Naive thymus-derived CD4-positive, alpha-beta T cell (primary cell): ENCODE measurements at regions of chr12 and their contacts with region 1.

Region 1: DNA sequence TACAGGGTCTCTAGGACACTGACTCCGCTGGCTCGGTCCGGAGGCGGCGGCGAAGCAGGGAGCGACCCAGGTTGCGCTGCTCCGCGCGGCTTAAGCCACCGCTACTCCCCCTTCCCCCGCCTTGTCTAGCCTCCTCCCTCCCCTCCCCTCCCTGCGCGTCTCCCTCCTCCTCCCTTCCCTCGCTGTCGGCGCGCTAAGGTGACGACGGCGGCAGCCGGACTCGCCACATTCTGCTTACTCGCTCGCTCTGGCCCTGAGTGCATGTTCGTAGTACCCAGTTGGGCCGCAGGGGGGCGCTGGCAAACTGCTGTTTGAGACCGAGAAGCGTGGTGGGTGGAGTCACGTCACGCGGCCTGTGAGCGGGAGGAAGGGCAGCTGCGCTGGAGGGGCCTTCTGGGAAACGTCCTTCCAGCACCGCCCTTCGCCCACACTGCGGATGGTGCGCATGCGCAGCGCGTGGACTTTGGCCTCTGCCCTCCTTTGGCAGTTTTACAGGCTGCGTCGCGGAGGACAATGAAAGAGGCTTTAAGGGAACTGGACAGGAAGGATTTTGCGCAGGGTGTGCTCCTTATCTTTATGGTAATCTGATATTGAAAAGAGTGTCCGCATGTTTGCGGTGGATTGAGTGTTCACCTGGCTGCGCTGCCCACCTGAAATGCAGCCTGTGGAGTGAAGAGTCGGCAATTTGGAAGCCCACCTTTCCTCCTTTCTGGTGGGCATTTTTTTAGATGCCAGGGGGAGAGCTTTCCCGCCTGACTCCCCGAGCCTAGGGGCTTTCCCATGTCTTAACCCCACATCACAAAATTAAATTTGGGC is at the start of gene SCAF11:
- DNase-seq: peak; percentile 100
- ATAC-seq: peak; percentile 92
- H3K4me3 ChIP-seq: peak within 1 kb of the TSS; percentile 94
- H3K4me3 Mint-ChIP-seq: peak within 1 kb of the TSS; percentile 91 to 99 (median 96)
- H3K27ac ChIP-seq: peak within 1 kb of the TSS; percentile 97
- H3K27ac Mint-ChIP-seq: peak within 1 kb of the TSS; percentile 99 to 100 (median 100)
- H3K4me1 ChIP-seq: peaks cover 21 to 35% of the 10 kb centered on the region in 2 donors
- H3K4me1 Mint-ChIP-seq: peaks cover 36 to 53% (median 47%) of the 10 kb centered on the region in 7 donors
- H3K27me3 ChIP-seq: no peaks in the 10 kb centered on the region
- H3K27me3 Mint-ChIP-seq: peaks cover 0 to 15% (median 0%) of the 10 kb centered on the region in 5 donors
- total RNA-seq, gene SCAF11: 144 to 194 (median 165) TPM

Region 2: DNA sequence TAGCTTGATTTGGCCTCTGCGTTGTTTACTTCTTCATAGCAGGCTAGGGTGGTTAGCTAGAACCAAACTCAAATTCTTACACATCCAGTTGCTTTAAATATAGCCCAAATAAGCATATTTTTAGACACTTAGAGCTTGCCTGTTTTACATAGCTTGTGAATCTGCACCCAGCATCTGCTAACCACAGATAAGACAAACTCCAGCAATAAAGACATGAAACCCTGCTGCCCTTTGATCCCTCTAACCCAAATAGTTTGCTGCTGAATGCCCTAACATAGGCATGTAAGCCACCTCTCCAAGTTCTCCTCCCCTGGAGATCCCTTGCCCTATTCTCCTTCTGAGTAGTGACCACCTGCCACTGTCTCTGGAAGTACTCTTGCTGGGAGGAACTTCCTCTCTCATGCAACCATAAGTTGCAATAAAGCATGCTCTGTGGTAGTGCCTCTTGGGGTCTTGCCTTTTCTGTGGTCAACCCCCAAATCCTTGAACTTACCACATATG is 1969.2 kb before region 1 on chr12:
- CTCF ChIA-PET with region 1: no interaction called
- POLR2A ChIA-PET with region 1: no interaction called
- intact Hi-C with region 1: no loop called
- DNase-seq: no peak
- ATAC-seq: no peak
- H3K4me3 ChIP-seq: no peak overlapping the region
- H3K4me3 Mint-ChIP-seq: no peak overlapping the region
- H3K27ac ChIP-seq: no peak overlapping the region
- H3K27ac Mint-ChIP-seq: no peak overlapping the region
- H3K4me1 ChIP-seq: no peaks in the 10 kb centered on the region
- H3K4me1 Mint-ChIP-seq: no peaks in the 10 kb centered on the region
- H3K27me3 ChIP-seq: no peaks in the 10 kb centered on the region
- H3K27me3 Mint-ChIP-seq: no peaks in the 10 kb centered on the region

Region 3: DNA sequence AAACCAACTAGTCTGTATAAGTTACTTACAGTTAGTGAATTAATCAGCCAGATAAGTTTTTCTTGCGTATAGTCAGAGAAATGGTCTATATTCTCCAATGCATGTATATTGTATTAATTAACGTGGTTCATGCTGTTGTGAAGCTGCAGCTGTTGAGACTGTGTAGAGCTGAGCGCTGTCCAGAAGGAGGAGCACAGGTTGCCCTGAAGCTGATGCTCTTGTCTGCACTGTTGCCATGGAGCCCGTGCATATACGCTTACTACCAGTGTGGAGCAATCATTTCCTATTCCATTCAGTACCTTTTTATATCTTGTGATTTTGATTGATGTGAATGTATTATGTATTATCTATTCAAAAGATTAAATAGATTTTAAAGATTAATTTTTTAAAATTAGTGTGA is 335.5 kb before region 1 on chr12:
- CTCF ChIA-PET with region 1: no interaction called
- POLR2A ChIA-PET with region 1: no interaction called
- intact Hi-C with region 1: loop called in 1 of 2 experiments (anchors 1 kb)
- DNase-seq: peak in 8 of 9 donors; percentile 17 to 83 (median 70)
- ATAC-seq: peak; percentile 100
- H3K4me3 ChIP-seq: no peak overlapping the region
- H3K4me3 Mint-ChIP-seq: no peak overlapping the region
- H3K27ac ChIP-seq: no peak overlapping the region
- H3K27ac Mint-ChIP-seq: peak overlapping the region in 1 of 9 donors; percentile 30
- H3K4me1 ChIP-seq: no peaks in the 10 kb centered on the region
- H3K4me1 Mint-ChIP-seq: peaks cover 0 to 10% (median 7%) of the 10 kb centered on the region in 7 donors
- H3K27me3 ChIP-seq: no peaks in the 10 kb centered on the region
- H3K27me3 Mint-ChIP-seq: peaks cover 0 to 60% (median 5%) of the 10 kb centered on the region in 5 donors

Region 4: DNA sequence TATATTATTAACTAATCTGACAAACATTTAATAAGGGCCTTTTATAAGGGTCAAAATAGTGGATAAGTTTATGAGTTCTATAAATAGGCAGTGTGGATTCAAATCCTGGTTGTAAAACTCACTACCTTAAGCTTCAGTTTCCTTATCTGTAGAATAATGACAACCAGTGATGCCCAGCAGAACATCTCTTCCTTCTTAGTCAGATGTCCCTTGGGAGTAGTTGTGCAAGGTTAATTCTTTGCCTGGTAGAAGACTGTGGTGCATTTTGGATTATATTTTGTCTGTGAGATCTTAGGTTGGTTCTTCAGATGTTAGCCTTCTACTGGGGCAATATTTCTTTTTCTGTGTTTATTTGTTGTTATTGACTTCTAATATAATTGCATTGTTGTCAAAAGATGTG is 201.7 kb before region 1 on chr12:
- CTCF ChIA-PET with region 1: no interaction called
- POLR2A ChIA-PET with region 1: no interaction called
- intact Hi-C with region 1: no loop called
- DNase-seq: no peak
- ATAC-seq: no peak
- H3K4me3 ChIP-seq: no peak overlapping the region
- H3K4me3 Mint-ChIP-seq: no peak overlapping the region
- H3K27ac ChIP-seq: no peak overlapping the region
- H3K27ac Mint-ChIP-seq: peak overlapping the region in 1 of 9 donors; percentile 5
- H3K4me1 ChIP-seq: no peaks in the 10 kb centered on the region
- H3K4me1 Mint-ChIP-seq: peaks cover 0 to 56% (median 42%) of the 10 kb centered on the region in 7 donors
- H3K27me3 ChIP-seq: no peaks in the 10 kb centered on the region
- H3K27me3 Mint-ChIP-seq: no peaks in the 10 kb centered on the region

Region 5: DNA sequence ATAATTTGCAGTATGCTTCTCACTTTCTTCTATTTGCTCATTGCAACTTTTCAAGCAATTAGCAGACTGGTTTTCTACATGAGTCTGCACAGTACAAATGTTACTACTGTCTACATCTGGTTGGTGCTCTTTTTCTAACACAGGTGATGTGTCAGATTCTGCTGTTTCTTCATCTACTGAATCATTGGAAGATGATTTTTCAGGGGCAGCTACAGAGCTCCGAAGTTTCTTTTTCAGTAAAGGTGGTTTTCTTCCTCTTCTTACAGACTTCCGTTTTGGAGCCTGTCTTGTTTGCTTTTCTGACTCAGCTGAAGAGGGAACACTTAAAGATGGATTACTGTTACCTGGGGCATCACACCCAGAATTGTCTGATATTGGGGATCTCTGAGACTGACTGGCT is 62.4 kb before region 1 on chr12:
- CTCF ChIA-PET with region 1: no interaction called
- POLR2A ChIA-PET with region 1: no interaction called
- intact Hi-C with region 1: no loop called
- DNase-seq: no peak
- ATAC-seq: no peak
- H3K4me3 ChIP-seq: no peak overlapping the region
- H3K4me3 Mint-ChIP-seq: peak overlapping the region in 1 of 10 donors; percentile 15
- H3K27ac ChIP-seq: no peak overlapping the region
- H3K27ac Mint-ChIP-seq: peak overlapping the region in 7 of 9 donors; percentile 13 to 81 (median 33)
- H3K4me1 ChIP-seq: no peaks in the 10 kb centered on the region
- H3K4me1 Mint-ChIP-seq: peaks cover 0 to 10% (median 0%) of the 10 kb centered on the region in 7 donors
- H3K27me3 ChIP-seq: no peaks in the 10 kb centered on the region
- H3K27me3 Mint-ChIP-seq: no peaks in the 10 kb centered on the region

Region 6: DNA sequence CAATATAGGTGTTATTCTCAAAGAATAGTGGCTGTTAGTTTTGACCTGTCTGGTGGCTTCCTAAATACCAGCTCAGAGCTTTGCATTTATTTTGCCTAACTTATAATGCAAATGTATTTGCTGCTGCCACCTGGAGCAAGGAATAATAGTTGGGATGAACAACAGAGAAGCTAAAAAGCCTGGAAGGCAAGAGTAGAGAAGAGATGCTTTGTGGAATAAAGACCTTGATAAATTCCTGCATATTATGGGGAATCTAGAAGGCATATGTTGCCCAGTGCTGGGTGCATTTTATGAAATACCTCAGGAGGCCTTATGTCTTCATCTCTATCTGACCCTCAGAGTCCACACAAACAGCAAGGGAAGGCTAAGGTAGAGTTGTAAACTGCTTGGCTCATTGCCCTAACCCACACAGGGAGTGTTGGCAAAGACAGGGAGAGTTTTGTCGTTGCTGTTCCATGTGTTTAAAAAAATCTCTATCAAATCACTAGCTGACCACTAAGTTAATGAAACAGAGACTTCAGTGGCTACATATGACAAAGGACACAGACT is 53.4 kb after region 1 on chr12:
- CTCF ChIA-PET with region 1: no interaction called
- POLR2A ChIA-PET with region 1: no interaction called
- intact Hi-C with region 1: no loop called
- DNase-seq: no peak
- ATAC-seq: no peak
- H3K4me3 ChIP-seq: no peak overlapping the region
- H3K4me3 Mint-ChIP-seq: no peak overlapping the region
- H3K27ac ChIP-seq: no peak overlapping the region
- H3K27ac Mint-ChIP-seq: no peak overlapping the region
- H3K4me1 ChIP-seq: no peaks in the 10 kb centered on the region
- H3K4me1 Mint-ChIP-seq: no peaks in the 10 kb centered on the region
- H3K27me3 ChIP-seq: no peaks in the 10 kb centered on the region
- H3K27me3 Mint-ChIP-seq: peaks cover 0 to 23% (median 15%) of the 10 kb centered on the region in 5 donors

Region 7: DNA sequence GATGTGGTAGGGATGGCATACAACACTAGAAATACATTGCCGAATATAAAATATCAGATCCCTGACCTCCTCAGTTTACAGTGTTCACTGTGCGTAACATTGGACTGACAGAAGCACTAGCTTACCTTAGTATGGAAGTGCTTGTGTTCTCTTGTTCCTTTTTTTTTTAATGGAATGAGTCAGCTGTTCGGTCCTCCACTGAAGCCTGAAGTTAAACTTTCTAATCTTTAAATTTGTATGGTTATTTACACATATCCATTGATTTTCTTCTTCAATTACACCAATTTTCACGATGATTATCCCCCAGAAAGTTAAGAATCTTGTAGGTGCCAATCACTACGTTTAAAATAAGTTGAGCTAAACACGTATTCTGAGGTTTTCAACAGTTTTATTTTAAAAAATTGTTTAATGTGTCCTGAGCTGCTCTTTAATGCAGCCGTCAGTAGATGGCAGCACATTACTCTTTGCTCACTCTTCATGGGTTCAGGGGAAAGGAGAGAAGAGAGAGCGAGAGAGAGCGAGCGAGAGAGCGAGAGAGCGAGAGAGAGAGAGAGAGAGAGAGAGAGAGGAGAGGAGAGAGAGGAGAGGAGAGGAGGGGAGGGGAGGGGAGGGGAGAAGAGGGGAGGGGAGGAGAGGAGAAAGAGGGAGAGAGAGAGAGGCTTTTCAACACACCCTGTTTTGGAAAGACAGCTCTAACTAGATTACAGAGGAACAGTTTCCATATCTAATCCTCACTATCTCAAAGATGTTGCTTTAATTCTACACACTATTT is 134.4 kb after region 1 on chr12:
- CTCF ChIA-PET with region 1: no interaction called
- POLR2A ChIA-PET with region 1: interaction called, 3 read pairs
- intact Hi-C with region 1: loop called (anchors 1 kb)
- DNase-seq: peak in 7 of 9 donors; percentile 45 to 68 (median 57)
- ATAC-seq: peak; percentile 99
- H3K4me3 ChIP-seq: no peak overlapping the region
- H3K4me3 Mint-ChIP-seq: peak overlapping the region in 9 of 10 donors; percentile 50 to 81 (median 67)
- H3K27ac ChIP-seq: no peak overlapping the region
- H3K27ac Mint-ChIP-seq: peak overlapping the region; percentile 40 to 93 (median 85)
- H3K4me1 ChIP-seq: peaks cover 0 to 3% of the 10 kb centered on the region in 2 donors
- H3K4me1 Mint-ChIP-seq: peaks cover 3 to 7% (median 6%) of the 10 kb centered on the region in 7 donors
- H3K27me3 ChIP-seq: no peaks in the 10 kb centered on the region
- H3K27me3 Mint-ChIP-seq: peaks cover 0 to 45% (median 0%) of the 10 kb centered on the region in 5 donors

Region 8: DNA sequence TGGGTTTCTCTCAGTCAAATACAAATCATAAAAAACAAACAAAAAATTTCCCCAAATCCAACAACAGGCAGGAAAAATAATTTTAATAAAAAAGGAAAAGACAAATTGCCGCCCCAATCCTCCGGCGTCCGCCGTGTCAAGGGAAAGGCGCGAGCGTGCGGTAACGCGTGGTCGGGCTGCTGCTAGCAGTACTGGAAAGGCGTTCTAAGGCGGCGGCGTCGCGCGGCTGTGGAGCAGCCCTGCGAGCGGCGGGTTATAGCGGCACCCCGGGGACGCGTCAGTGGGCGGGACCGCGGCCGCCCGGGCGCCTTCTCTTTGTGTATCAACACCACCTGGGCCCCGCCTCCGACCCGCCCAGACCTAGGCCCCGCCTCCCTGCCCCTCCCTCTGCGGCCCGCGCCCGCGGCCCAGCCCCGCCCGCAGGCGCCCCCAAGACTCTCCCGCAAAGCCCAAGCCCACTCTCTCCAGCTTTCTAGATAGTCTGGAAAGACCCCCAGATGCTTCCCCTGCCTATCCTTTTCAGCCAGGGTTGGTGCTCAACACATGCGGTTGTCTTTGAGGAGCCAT is 382.0 kb after region 1 on chr12 and contains the start of gene SLC38A2:
- CTCF ChIA-PET with region 1: no interaction called
- POLR2A ChIA-PET with region 1: interaction called, 23 read pairs
- intact Hi-C with region 1: loop called (anchors 1 kb)
- DNase-seq: peak; percentile 95 to 98 (median 96)
- ATAC-seq: peak; percentile 96
- H3K4me3 ChIP-seq: peak within 1 kb of the TSS; percentile 87
- H3K4me3 Mint-ChIP-seq: peak within 1 kb of the TSS; percentile 79 to 99 (median 96)
- H3K27ac ChIP-seq: peak within 1 kb of the TSS; percentile 89
- H3K27ac Mint-ChIP-seq: peak within 1 kb of the TSS; percentile 91 to 100 (median 99)
- H3K4me1 ChIP-seq: peaks cover 37 to 41% of the 10 kb centered on the region in 2 donors
- H3K4me1 Mint-ChIP-seq: peaks cover 31 to 68% (median 59%) of the 10 kb centered on the region in 7 donors
- H3K27me3 ChIP-seq: no peaks in the 10 kb centered on the region
- H3K27me3 Mint-ChIP-seq: peaks cover 0 to 11% (median 0%) of the 10 kb centered on the region in 5 donors
- total RNA-seq, gene SLC38A2: 157 to 269 (median 175) TPM

Region 9: DNA sequence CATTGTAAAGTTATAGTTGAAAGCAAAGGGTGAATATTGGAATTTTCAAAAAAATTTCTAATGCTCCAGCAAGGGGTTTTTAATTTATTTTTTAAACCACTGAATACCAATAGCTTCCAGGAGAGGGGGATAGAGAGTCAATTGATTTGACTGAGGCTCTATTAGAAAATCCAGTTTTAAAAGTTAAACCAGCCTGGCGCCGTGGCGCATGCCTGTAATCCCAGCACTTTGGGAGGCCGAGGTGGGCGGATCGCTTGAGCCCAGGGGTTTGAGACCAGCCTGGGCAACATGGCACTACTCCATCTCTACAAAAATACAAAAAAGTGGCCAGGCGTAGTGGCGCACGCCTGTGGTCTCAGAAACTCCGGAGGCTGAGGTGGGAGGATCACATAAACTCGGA is 685.1 kb after region 1 on chr12:
- CTCF ChIA-PET with region 1: no interaction called
- POLR2A ChIA-PET with region 1: no interaction called
- intact Hi-C with region 1: loop called in 1 of 2 experiments (anchors 5 kb)
- DNase-seq: peak in 5 of 9 donors; percentile 24 to 38 (median 34)
- ATAC-seq: no peak
- H3K4me3 ChIP-seq: no peak overlapping the region
- H3K4me3 Mint-ChIP-seq: no peak overlapping the region
- H3K27ac ChIP-seq: no peak overlapping the region
- H3K27ac Mint-ChIP-seq: no peak overlapping the region
- H3K4me1 ChIP-seq: no peaks in the 10 kb centered on the region
- H3K4me1 Mint-ChIP-seq: peaks cover 0 to 16% (median 0%) of the 10 kb centered on the region in 7 donors
- H3K27me3 ChIP-seq: no peaks in the 10 kb centered on the region
- H3K27me3 Mint-ChIP-seq: peaks cover 0 to 3% (median 0%) of the 10 kb centered on the region in 5 donors

Region 10: DNA sequence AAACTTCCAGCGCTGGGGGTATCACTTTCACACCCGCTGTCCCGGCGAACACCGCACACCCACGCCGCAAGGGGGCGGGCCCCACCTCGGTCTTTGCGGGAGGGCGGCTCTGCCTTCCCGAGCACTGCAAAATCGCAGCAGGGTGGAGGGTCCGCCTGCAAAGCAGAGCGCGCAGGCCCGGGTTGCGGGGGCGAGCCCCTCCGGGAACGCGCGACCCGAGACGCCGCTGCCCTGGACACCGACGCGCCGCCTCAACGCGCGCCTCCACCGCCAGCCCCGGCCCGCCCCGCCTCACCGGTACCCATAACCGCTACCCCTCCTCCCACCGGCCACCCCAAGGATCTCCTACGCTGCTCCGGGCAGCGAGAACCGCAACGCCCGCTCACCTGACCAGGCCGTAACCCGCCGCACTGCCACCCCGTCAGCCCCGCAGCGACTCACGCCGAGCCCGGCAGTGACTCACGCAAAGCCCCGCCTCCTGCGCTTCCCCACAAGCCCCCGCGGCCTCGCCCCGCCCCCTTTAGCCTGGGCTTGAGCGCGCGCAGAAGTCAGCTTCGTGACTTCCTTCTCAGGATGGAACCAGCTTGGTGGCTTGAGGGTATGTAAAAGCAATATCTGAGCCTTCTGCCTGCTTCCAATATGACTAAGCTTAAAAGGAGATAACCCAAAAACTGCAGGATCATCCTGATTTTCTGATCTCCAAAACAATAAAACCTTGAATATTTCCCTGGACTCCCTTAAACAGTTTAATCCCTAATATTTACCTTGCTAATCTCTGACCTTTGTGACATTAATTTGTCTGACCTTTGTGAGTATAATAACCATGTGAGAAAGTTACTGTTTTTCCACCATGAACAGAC is 1715.1 kb after region 1 on chr12 and contains the start of gene RPAP3:
- CTCF ChIA-PET with region 1: interaction called, 3 read pairs
- POLR2A ChIA-PET with region 1: no interaction called
- intact Hi-C with region 1: loop called (anchors 1 to 2 kb)
- DNase-seq: peak; percentile 91 to 99 (median 95)
- ATAC-seq: peak; percentile 97
- H3K4me3 ChIP-seq: peak within 1 kb of the TSS; percentile 59
- H3K4me3 Mint-ChIP-seq: peak within 1 kb of the TSS; percentile 92 to 99 (median 98)
- H3K27ac ChIP-seq: peak within 1 kb of the TSS; percentile 85
- H3K27ac Mint-ChIP-seq: peak within 1 kb of the TSS; percentile 93 to 99 (median 97)
- H3K4me1 ChIP-seq: peaks cover 21 to 27% of the 10 kb centered on the region in 2 donors
- H3K4me1 Mint-ChIP-seq: peaks cover 48 to 73% (median 63%) of the 10 kb centered on the region in 7 donors
- H3K27me3 ChIP-seq: no peaks in the 10 kb centered on the region
- H3K27me3 Mint-ChIP-seq: no peaks in the 10 kb centered on the region
- total RNA-seq, gene RPAP3: 28.5 to 51.3 (median 43.9) TPM